HEK293 (cell line): ENCODE measurements at regions of chr10 and their contacts with region 1.

Region 1: GRCh38 chr10:60434418-60435046 is 44.9 kb upstream of the ANK3 start:
- H3K4me3 ChIP-seq: no peak overlapping the region
- H3K27ac ChIP-seq: no peak overlapping the region
- H3K4me1 ChIP-seq: no peaks in the 10 kb centered on the region
- CTCF ChIP-seq: peak; percentile 36; the same call in 1 of the 2 replicates

Region 2: GRCh38 chr10:60237977-60238758 is 196.4 kb before region 1 on chr10:
- CTCF ChIA-PET with region 1: interaction called, 16 read pairs
- POLR2A ChIA-PET with region 1: no interaction called
- H3K4me3 ChIP-seq: no peak overlapping the region
- H3K27ac ChIP-seq: no peak overlapping the region
- H3K4me1 ChIP-seq: no peaks in the 10 kb centered on the region
- CTCF ChIP-seq: 0 out of 2 replicates have a peak, but pooled peaks have one; percentile 36

Region 3: GRCh38 chr10:60351191-60351853 is 83.2 kb before region 1 on chr10:
- CTCF ChIA-PET with region 1: no interaction called
- POLR2A ChIA-PET with region 1: no interaction called
- H3K4me3 ChIP-seq: no peak overlapping the region
- H3K27ac ChIP-seq: no peak overlapping the region
- H3K4me1 ChIP-seq: no peaks in the 10 kb centered on the region
- CTCF ChIP-seq: no peak

Region 4: DNA sequence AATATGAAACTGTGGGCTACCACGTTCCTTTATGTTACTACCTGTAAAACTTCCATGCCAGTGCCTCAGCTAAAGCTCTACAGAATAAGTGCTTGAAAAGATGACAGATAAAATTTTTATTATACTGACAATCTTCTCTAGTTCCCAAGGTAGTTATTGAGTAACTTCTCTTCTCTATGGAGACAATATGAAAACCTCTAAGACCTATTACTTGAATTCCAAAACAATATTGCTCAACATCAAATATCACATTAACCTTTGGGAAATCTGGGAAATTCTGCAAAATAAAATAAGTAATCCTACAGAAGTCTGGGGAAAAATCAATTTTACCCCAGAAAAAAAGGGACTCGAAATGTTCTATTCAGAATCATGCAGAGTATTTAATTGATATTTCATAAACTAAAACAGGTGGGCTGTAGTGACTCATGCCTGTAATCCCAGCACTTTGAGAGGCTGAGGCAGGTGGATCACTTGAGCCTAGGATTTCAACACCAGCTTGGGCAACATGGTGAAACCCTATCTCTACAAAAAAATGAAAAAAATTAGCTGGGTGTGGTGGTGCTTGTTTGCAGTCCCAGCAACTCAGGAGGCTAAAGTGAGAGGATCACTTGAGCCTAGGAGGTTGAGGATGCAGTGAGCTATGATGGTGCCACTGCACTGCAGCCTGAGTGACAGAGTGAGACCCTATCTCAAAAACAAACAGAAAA is 21.1 kb before region 1 on chr10:
- CTCF ChIA-PET with region 1: no interaction called
- POLR2A ChIA-PET with region 1: no interaction called
- H3K4me3 ChIP-seq: no peak overlapping the region
- H3K27ac ChIP-seq: no peak overlapping the region
- H3K4me1 ChIP-seq: no peaks in the 10 kb centered on the region
- CTCF ChIP-seq: no peak